Activated CD4-positive, alpha-beta T cell treated with anti-CD3 and anti-CD28 coated beads, Interleukin-2, amount 10 ng/mL, durations not matched to agents 24 days and 14 days (primary cell): ENCODE measurements at regions of chr17 and their contacts with region 1.

Region 1: GRCh38 chr17:1490643-1491442 is 1.6 kb downstream of the MYO1C start:
- DNase-seq: peak; percentile 94
- H3K4me3 Mint-ChIP-seq: peak overlapping the region; percentile 92
- H3K27ac Mint-ChIP-seq: peak overlapping the region; percentile 79
- H3K4me1 Mint-ChIP-seq: peaks cover 27% of the 10 kb centered on the region
- H3K27me3 Mint-ChIP-seq: no peaks in the 10 kb centered on the region

Region 2: GRCh38 chr17:1455797-1456599 is 34.8 kb before region 1 on chr17 and contains the start of gene CRK:
- intact Hi-C with region 1: loop called (anchors 2 kb)
- DNase-seq: peak; percentile 100
- H3K4me3 Mint-ChIP-seq: peak within 1 kb of the TSS; percentile 91
- H3K27ac Mint-ChIP-seq: peak within 1 kb of the TSS; percentile 91
- H3K4me1 Mint-ChIP-seq: peaks cover 24% of the 10 kb centered on the region
- H3K27me3 Mint-ChIP-seq: peaks cover 14% of the 10 kb centered on the region
- total RNA-seq, gene CRK: 22.5 and 24.3 TPM in 2 replicates